A549 (cell line): ENCODE measurements at regions of chr2 and their contacts with region 1.

Region 1: DNA sequence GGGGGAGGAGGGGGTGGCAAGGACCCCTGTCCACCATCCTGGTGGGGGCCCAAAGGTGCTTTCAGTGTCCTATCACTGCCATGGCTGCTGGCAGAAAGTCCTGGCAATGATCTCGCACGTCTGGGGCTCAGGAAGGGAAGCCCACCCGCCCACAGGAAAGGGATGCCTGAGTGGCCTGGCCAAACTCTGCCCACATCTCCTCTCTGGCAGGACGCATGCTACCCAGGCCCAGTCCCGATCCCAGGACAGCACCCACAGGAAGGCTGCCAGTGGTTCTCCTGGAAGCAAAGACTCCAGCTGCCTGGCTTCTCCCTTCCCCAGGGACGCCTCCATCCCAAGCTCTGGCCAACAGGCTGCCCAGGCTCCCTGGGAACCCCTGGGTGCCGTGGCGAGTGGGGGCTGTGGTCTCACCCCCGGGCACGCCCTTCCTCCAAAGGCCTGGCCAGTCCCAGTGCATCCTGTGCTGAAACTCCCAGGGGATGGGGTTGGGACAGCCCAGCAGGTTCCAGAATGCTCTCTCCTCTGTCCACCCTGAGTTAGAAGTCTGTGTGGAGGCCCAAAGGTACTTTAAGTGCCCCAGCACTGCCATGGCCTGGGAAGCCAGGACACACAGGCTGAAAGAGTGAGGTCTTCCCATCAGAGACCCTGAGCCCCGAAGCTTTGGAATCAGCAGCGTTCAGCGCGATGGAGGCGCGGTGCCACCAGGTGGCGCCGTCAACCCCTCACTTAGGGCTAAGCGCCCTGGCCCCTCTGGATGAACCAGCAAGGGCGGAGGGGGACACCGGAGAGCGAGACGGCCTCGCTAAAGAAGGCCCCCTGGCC is 29.8 kb upstream of the TAF1B start:
- DNase-seq: peak; percentile 64 to 86
- ATAC-seq: peak; percentile 86 to 96
- H3K4me3 ChIP-seq: 0 out of 3 replicates have a peak overlapping the region, but pooled peaks have one; percentile 17
- H3K27ac ChIP-seq: peak overlapping the region; percentile 36 to 43; a peak in 5 of 6 replicates
- H3K4me1 ChIP-seq: peaks cover 7% of the 10 kb centered on the region; the same call in 2 of the 3 replicates
- CTCF ChIP-seq: peak; percentile 98
- EP300 ChIP-seq: no peak
- POLR2A ChIP-seq: no peak
- RAD21 ChIP-seq: peak; percentile 90 to 93

Region 2: GRCh38 chr2:9703085-9703641 is 110.4 kb before region 1 on chr2:
- CTCF ChIA-PET with region 1: no interaction called
- POLR2A ChIA-PET with region 1: no interaction called
- DNase-seq: peak; percentile 90 to 97
- ATAC-seq: peak; percentile 87 to 88
- H3K4me3 ChIP-seq: peak overlapping the region; percentile 17; the same call in 1 of the 3 replicates
- H3K27ac ChIP-seq: peak overlapping the region; percentile 91 to 95
- H3K4me1 ChIP-seq: peaks cover 48% of the 10 kb centered on the region
- CTCF ChIP-seq: peak; percentile 17; the same call in 1 of the 3 replicates
- EP300 ChIP-seq: peak in 1 of 2 experiments; percentile 4; a peak in 1 of 5 replicates
- POLR2A ChIP-seq: no peak
- RAD21 ChIP-seq: peak; percentile 47 to 51; a peak in 4 of 5 replicates

Region 3: GRCh38 chr2:9770308-9771100 is 43.0 kb before region 1 on chr2:
- CTCF ChIA-PET with region 1: interaction called, 18 read pairs
- POLR2A ChIA-PET with region 1: no interaction called
- DNase-seq: peak; percentile 82 to 91
- ATAC-seq: peak; percentile 67 to 85
- H3K4me3 ChIP-seq: no peak overlapping the region
- H3K27ac ChIP-seq: peak overlapping the region; percentile 54 to 79; a peak in 5 of 6 replicates
- H3K4me1 ChIP-seq: peaks cover 25% of the 10 kb centered on the region
- CTCF ChIP-seq: peak; percentile 82
- EP300 ChIP-seq: no peak
- POLR2A ChIP-seq: no peak
- RAD21 ChIP-seq: peak; percentile 72 to 75

Region 4: GRCh38 chr2:9830690-9831410 is 17.3 kb after region 1 on chr2:
- CTCF ChIA-PET with region 1: interaction called, 43 read pairs
- POLR2A ChIA-PET with region 1: no interaction called
- DNase-seq: no peak
- ATAC-seq: peak in 1 of 2 experiments; percentile 43; a peak in 1 of 6 replicates
- H3K4me3 ChIP-seq: no peak overlapping the region
- H3K27ac ChIP-seq: no peak overlapping the region
- H3K4me1 ChIP-seq: no peaks in the 10 kb centered on the region
- CTCF ChIP-seq: no peak
- EP300 ChIP-seq: no peak
- POLR2A ChIP-seq: no peak
- RAD21 ChIP-seq: no peak

Region 5: DNA sequence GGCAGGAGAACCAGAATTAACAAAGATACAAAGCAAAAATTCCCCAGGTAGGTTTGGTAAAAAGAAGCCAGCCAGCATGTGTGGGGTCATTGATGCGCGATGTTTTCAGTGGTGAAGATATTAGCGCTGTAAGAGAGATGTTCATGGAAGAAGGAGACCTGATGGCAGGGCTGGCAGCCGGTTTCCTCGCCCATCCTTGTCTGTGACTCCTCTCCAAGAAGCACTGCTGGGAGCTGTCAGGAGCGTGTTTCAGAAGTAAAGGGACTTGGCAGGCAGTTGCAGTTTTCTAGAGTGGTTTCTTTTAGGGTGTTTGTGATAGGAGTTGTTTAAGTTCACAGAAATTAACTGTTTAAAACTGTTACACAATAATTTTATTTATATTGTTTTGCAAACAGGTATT is 54.4 kb after region 1 on chr2:
- CTCF ChIA-PET with region 1: interaction called, 13 read pairs
- POLR2A ChIA-PET with region 1: no interaction called
- DNase-seq: no peak
- ATAC-seq: peak; percentile 43 to 47; a peak in 3 of 6 replicates
- H3K4me3 ChIP-seq: no peak overlapping the region
- H3K27ac ChIP-seq: no peak overlapping the region
- H3K4me1 ChIP-seq: no peaks in the 10 kb centered on the region
- CTCF ChIP-seq: no peak
- EP300 ChIP-seq: no peak
- POLR2A ChIP-seq: no peak
- RAD21 ChIP-seq: no peak

Region 6: GRCh38 chr2:9941196-9941995 is 127.9 kb after region 1 on chr2:
- CTCF ChIA-PET with region 1: interaction called, 23 read pairs
- POLR2A ChIA-PET with region 1: no interaction called
- DNase-seq: no peak
- ATAC-seq: peak in 1 of 2 experiments; percentile 35; a peak in 3 of 6 replicates
- H3K4me3 ChIP-seq: no peak overlapping the region
- H3K27ac ChIP-seq: no peak overlapping the region
- H3K4me1 ChIP-seq: peaks cover 7% of the 10 kb centered on the region; the same call in 2 of the 3 replicates
- CTCF ChIP-seq: no peak
- EP300 ChIP-seq: no peak
- POLR2A ChIP-seq: no peak
- RAD21 ChIP-seq: no peak

Region 7: GRCh38 chr2:10028988-10029874 is 215.7 kb after region 1 on chr2:
- CTCF ChIA-PET with region 1: interaction called, 24 read pairs
- POLR2A ChIA-PET with region 1: no interaction called
- DNase-seq: no peak
- ATAC-seq: no peak; a peak in 1 of 6 replicates
- H3K4me3 ChIP-seq: no peak overlapping the region
- H3K27ac ChIP-seq: no peak overlapping the region
- H3K4me1 ChIP-seq: no peaks in the 10 kb centered on the region
- CTCF ChIP-seq: no peak
- EP300 ChIP-seq: no peak
- POLR2A ChIP-seq: no peak
- RAD21 ChIP-seq: no peak

Region 8: GRCh38 chr2:10072656-10073480 is 259.3 kb after region 1 on chr2:
- CTCF ChIA-PET with region 1: interaction called, 16 read pairs
- POLR2A ChIA-PET with region 1: no interaction called
- DNase-seq: peak; percentile 88 to 95
- ATAC-seq: peak; percentile 94 to 96
- H3K4me3 ChIP-seq: no peak overlapping the region
- H3K27ac ChIP-seq: no peak overlapping the region
- H3K4me1 ChIP-seq: peaks cover 4% of the 10 kb centered on the region; the same call in 1 of the 3 replicates
- CTCF ChIP-seq: peak; percentile 95
- EP300 ChIP-seq: no peak
- POLR2A ChIP-seq: no peak
- RAD21 ChIP-seq: peak; percentile 81 to 85